KBM-7 (cell line): ENCODE measurements at regions of chr6 and their contacts with region 1.

Region 1: GRCh38 chr6:75317503-75318206 is 33.1 kb upstream of the TMEM30A start:
- DNase-seq: no peak

Region 2: DNA sequence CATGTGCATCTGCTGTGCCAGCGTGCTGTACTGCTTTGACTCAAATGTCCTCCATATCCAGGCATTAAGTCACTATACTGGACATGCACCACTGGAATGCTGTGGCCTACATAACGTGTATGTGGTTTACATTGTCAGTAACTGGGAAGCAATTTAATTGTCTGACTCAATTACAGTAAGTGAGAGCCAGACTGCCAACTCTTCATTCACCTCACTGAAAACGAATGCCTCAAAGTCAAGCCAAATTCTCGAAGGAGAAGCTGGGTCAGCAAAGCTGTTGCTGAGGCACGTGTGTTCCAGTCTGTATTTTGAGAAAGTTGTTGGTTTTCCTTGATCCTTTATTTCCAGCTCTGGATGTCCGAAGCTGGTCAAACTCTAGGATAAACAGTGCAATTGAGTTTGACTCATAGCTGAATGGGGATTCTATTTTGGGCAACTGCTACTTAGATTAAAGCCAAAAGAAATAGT is 646.1 kb before region 1 on chr6:
- in situ Hi-C with region 1: no loop called
- DNase-seq: no peak

Region 3: DNA sequence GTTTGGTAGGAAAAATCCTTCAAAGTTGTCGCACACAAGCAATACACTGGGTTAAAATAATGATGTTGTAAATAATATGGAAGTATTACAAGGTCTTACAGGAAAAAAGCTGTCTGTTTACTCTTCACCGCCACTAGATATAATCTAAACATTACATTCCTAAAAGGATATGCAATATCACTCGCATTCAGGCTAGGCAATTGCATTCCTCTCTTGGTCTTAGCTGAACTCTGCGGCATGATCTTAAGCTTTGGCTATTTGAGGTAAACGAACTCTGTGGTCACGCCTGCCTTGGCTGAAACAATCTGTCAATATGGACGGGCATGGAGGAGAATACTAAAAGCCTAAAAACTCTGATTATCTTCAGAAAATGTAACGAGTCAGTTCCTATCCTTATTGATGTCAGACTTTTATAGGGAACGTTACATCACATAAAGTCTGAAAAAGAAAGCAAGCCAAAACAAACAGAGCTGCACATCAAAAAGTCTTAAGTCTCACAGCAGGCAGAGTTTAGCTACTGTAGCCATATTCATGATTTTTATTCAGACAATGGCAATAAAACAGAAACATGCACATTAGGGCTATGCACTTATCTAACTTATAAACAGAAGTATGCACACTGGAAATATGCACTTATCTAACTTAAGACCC is 206.8 kb after region 1 on chr6:
- in situ Hi-C with region 1: loop called (anchors 25 kb)
- DNase-seq: no peak